HEK293T (cell line): ENCODE measurements at regions of chr22 and their contacts with region 1.

Region 1: DNA sequence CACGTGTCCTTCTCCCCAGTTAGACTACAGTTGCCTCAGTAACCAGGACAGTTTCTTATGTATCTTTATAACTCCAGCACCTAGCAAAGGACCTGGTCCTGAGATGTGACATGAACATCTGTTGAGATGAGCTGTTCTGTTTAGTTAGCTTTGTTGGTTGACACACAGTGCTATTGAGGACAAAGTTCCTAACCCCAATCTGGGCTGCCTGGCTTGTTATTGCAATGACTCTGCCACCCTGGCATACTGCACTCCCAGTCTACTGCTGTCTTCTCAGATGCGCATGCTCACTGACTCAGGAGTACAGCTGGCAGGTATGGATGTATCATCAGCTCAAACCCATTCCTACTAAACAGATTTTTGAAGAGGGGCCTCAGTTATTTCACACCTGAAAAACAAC is 7.4 kb downstream of the DESI1 start:
- DNase-seq: no peak

Region 2: DNA sequence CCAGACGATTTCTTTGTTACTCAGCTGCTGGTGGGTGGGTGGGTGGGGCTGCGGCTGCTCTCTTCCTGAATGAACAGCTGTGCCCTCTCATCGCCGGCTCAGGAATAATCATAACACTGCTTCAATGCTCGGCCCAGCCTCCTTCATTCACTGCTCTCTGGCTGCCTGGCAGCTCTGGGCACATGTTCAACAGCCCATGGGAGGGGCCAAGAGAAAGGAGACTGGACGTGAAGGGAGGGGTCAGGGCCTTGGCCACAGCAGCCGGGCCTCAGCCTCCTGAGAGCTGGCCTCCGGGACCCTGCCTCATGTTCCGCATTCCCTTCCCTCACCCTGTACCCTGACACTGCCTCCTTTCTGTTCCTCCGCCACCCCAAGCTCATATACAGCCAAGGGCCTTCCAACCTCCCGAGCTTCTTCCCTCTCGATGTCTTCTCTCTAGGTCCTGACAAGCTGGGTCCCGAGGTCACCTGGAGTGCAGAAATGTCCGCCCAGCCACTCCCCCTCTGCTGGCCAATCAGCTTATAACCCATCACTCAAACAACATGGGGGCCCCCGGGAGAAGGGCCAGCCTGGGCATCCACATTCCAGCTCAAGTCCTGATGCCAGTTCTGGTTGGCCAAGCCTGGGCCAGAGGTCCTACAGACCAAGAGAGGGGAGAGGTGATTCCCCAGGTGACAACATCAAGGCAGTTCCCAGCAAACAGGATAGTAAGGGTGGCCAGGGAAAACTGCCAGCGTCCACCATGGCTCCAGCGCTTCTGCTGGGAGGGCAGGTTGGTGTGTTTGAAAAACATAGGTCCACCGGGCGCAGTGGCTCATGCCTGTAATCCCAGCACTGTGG is 55.8 kb before region 1 on chr22:
- CTCF ChIA-PET with region 1: interaction called, 12 read pairs
- POLR2A ChIA-PET with region 1: no interaction called
- DNase-seq: no peak

Region 3: GRCh38 chr22:41642331-41643110 is 29.1 kb after region 1 on chr22:
- CTCF ChIA-PET with region 1: no interaction called
- POLR2A ChIA-PET with region 1: no interaction called
- DNase-seq: no peak